Activated naive CD4-positive, alpha-beta T cell treated with anti-CD3 and anti-CD28 coated beads, Interleukin-2, amount 10 ng/mL, durations not matched to agents 7 days and 5 days (primary cell): ENCODE measurements at regions of chr12 and their contacts with region 1.

Region 1: DNA sequence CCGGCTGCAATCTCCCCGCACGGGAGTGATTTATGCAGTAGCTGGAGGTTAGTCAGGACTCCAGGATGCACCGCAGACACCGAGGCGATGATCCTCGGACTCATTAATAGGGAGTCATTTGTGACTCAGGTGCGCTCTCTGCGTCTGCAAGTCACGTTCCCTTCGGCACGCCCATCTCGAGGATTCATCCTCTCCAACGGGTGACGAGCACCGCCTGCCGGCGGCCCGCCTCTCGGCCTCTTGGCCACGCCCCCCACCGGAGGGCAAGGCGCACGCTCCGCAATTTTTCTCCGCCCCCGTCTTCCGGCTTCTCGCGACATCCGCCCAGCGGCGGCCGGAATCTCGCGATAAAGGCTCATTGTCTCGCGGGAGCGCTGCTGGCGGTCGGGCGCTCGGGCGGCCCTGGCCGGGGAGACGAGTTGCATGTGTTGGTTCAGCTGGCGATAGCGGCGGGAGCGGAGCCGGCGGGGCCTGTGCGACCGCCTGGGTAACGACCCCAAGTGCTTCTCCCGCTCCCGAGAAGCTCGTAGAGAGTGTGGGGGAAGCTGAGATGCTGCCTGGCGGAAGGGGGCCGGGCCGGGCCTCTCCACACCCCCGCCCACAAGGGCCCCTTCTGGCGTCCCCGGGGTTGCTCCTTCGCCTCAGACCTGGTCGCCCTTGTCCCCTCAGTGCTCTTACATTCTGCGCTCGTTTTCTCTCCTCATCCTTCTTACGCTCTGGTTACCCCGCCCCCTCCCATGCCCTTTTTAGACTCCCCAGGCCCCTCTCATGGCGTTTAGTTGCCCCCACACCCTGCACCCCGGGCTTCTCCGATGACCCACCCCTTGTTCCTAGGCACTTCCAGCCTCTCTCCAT is at the start of gene DENR:
- DNase-seq: peak; percentile 99
- H3K4me3 Mint-ChIP-seq: peak within 1 kb of the TSS; percentile 96
- H3K27ac Mint-ChIP-seq: peak within 1 kb of the TSS; percentile 95
- H3K4me1 Mint-ChIP-seq: peaks cover 64% of the 10 kb centered on the region
- H3K27me3 Mint-ChIP-seq: no peaks in the 10 kb centered on the region

Region 2: DNA sequence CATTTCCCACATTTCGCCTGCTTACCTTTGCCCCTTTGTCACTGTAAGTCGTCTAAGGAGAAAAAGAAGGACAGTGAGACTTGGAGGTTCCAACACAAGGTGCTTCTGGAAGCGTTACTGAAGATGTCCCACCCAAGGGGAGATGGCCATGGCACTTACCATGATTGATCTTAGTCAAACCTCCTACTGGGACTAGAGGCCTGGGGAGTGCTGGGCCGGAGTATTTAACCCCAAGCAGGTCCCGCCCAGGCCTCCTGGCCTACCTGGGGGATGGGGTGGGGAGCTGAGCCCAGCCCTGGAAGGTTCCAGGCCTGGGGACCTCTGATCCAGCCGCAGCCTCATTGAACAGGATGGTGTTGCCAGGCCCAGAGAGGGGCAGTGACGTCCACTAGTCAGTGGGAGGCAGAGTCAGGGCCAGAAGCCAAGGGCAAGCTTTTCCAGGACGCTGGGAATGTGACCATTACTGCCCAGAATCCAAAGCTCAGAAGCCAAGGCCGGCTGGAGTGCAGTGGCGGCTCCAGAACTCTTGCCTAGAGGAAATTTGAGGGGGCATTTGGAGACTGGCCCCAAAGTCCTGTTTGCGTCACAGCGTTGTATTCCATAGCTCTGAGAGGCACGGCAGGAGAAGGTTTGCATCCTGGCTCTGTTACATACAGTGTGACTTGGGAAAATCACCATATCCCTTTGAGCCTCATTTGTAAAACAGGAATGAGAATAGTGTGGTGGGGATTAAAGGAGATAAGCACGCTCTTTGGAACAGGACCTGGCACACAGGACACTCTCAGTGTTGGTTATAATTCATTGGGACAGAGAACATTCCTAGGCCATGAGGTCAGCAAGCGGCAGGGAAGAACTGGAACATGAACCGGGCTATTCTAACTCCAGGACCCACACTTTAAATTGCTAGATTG is 893.8 kb before region 1 on chr12 and contains the start of gene HPD:
- CTCF ChIA-PET with region 1: no interaction called
- DNase-seq: no peak
- H3K4me3 Mint-ChIP-seq: no peak within 1 kb of the TSS
- H3K27ac Mint-ChIP-seq: no peak within 1 kb of the TSS
- H3K4me1 Mint-ChIP-seq: peaks cover 2% of the 10 kb centered on the region
- H3K27me3 Mint-ChIP-seq: no peaks in the 10 kb centered on the region

Region 3: GRCh38 chr12:122563361-122563760 is 189.3 kb before region 1 on chr12:
- CTCF ChIA-PET with region 1: no interaction called
- DNase-seq: no peak
- H3K4me3 Mint-ChIP-seq: no peak overlapping the region
- H3K27ac Mint-ChIP-seq: no peak overlapping the region
- H3K4me1 Mint-ChIP-seq: no peaks in the 10 kb centered on the region
- H3K27me3 Mint-ChIP-seq: no peaks in the 10 kb centered on the region

Region 4: DNA sequence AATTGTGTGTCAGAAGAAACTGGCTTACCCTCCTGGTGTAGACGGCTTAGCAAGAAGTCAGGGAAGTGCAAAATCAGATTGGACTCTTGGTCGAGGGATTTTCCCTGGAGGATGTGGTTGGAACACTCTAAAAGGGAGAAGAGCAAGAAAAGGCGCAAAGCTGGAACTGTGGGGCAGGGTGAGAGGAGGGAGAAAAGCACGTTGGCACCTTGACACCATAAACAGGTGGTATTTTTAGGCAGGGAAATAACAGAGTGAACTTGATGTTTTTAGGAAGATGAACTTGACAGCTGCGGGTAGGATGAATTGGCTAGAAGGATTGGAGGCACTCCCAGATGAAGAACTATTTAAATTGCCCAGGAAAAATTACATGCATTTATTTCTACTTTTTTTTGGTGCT is 117.2 kb before region 1 on chr12:
- CTCF ChIA-PET with region 1: interaction called, 30 read pairs
- DNase-seq: no peak
- H3K4me3 Mint-ChIP-seq: no peak overlapping the region
- H3K27ac Mint-ChIP-seq: no peak overlapping the region
- H3K4me1 Mint-ChIP-seq: no peaks in the 10 kb centered on the region
- H3K27me3 Mint-ChIP-seq: no peaks in the 10 kb centered on the region